ENCODE measurements at regions of chrX and their contacts with region 1.

Region 1: DNA sequence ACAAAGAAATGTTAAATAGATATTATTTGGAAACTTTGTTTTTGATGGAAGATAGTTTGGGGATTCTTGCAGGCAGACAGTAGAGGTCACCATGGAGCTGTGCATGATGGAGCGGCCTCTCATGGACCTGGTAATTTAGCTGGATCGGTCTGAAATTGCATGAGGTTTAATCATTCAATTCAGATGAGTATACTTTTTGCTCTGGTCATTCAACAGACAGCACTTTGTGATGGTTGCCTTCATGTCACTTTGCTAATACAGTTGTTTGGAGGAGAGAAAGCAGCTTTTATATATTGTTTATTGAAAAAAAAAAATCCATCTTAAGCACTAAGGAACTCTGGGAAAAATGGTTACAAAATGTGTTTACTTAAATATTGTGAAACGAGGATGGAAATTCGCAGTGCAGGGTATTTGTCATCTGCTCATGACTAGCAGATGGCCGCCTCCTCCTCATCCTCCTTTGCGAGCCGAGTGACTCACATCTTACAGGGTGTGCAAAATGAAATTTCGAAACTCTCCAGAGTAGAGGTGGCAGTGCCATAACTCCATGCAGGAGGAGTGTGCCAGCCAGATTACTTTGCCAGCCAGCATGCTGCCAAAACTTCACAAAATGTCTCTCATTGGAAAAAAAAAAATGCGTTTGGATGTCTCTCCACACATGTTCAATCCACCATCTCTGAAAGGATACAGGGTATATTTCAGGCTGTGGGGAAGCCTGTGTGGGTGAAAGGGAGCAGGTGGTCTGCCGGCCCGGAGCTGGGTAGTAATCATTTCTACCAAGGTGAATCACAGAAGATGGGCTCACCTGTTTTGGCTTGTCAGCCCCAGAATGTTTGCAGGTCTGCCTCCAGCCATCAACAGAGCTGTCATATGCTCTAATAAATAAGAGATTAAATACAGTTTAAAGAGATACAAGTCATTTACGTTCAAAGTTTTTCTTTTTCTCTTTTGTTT is 314.9 kb upstream of the DIPK2B start:
- DNase-seq: no peak
- ATAC-seq: peak; percentile 59; the same call in 1 of the 3 replicates
- H3K4me3 ChIP-seq: no peak overlapping the region
- H3K27ac ChIP-seq: no peak overlapping the region
- H3K4me1 ChIP-seq: no peaks in the 10 kb centered on the region
- H3K27me3 ChIP-seq: no peaks in the 10 kb centered on the region
- CTCF ChIP-seq: peak; percentile 42 to 59 (median 50); a peak in 5 of 6 replicates
- EP300 ChIP-seq: no peak
- POLR2A ChIP-seq: no peak
- RAD21 ChIP-seq: peak; percentile 73

Region 2: GRCh38 chrX:45537936-45538335 is 22.4 kb after region 1 on chrX:
- CTCF ChIA-PET with region 1: no interaction called
- POLR2A ChIA-PET with region 1: no interaction called
- RAD21 ChIA-PET with region 1: no interaction called
- SMC1A ChIA-PET with region 1: no interaction called
- in situ Hi-C with region 1: no loop called
- intact Hi-C with region 1: no loop called
- DNase-seq: no peak
- ATAC-seq: no peak
- H3K4me3 ChIP-seq: no peak overlapping the region
- H3K27ac ChIP-seq: no peak overlapping the region
- H3K4me1 ChIP-seq: no peaks in the 10 kb centered on the region
- H3K27me3 ChIP-seq: no peaks in the 10 kb centered on the region
- CTCF ChIP-seq: no peak
- EP300 ChIP-seq: no peak
- POLR2A ChIP-seq: no peak
- RAD21 ChIP-seq: no peak

Region 3: GRCh38 chrX:45749375-45749774 is 233.8 kb after region 1 on chrX:
- CTCF ChIA-PET with region 1: interaction called, 3 read pairs
- POLR2A ChIA-PET with region 1: no interaction called
- RAD21 ChIA-PET with region 1: no interaction called
- SMC1A ChIA-PET with region 1: no interaction called
- in situ Hi-C with region 1: no loop called
- intact Hi-C with region 1: loop called (anchors 1 kb)
- DNase-seq: no peak
- ATAC-seq: 0 out of 3 replicates have a peak, but pooled peaks have one; percentile 19
- H3K4me3 ChIP-seq: no peak overlapping the region
- H3K27ac ChIP-seq: no peak overlapping the region
- H3K4me1 ChIP-seq: no peaks in the 10 kb centered on the region
- H3K27me3 ChIP-seq: no peaks in the 10 kb centered on the region
- CTCF ChIP-seq: peak; percentile 21 to 47 (median 28); a peak in 4 of 6 replicates
- EP300 ChIP-seq: no peak
- POLR2A ChIP-seq: no peak
- RAD21 ChIP-seq: peak; percentile 36; the same call in 1 of the 2 replicates

Region 4: GRCh38 chrX:45807572-45808425 is 292.3 kb after region 1 on chrX:
- CTCF ChIA-PET with region 1: no interaction called
- POLR2A ChIA-PET with region 1: no interaction called
- RAD21 ChIA-PET with region 1: no interaction called
- SMC1A ChIA-PET with region 1: no interaction called
- in situ Hi-C with region 1: no loop called
- intact Hi-C with region 1: no loop called
- DNase-seq: no peak
- ATAC-seq: no peak
- H3K4me3 ChIP-seq: no peak overlapping the region; the same call in 1 of the 2 replicates
- H3K27ac ChIP-seq: no peak overlapping the region
- H3K4me1 ChIP-seq: peaks cover 11% of the 10 kb centered on the region
- H3K27me3 ChIP-seq: no peaks in the 10 kb centered on the region
- CTCF ChIP-seq: no peak
- EP300 ChIP-seq: no peak
- POLR2A ChIP-seq: no peak
- RAD21 ChIP-seq: no peak

Region 5: GRCh38 chrX:45843518-45843917 is 328.0 kb after region 1 on chrX:
- CTCF ChIA-PET with region 1: no interaction called
- POLR2A ChIA-PET with region 1: no interaction called
- RAD21 ChIA-PET with region 1: no interaction called
- SMC1A ChIA-PET with region 1: interaction called, 3 read pairs
- in situ Hi-C with region 1: loop called (anchors 10 kb)
- intact Hi-C with region 1: loop called (anchors 1 kb)
- DNase-seq: no peak
- ATAC-seq: peak; percentile 53; the same call in 2 of the 3 replicates
- H3K4me3 ChIP-seq: no peak overlapping the region
- H3K27ac ChIP-seq: no peak overlapping the region
- H3K4me1 ChIP-seq: no peaks in the 10 kb centered on the region
- H3K27me3 ChIP-seq: peaks cover 0 to 2% of the 10 kb centered on the region in 2 experiments; a peak in 1 of 4 replicates
- CTCF ChIP-seq: peak in 2 of 3 experiments; percentile 9 to 34; a peak in 1 of 6 replicates
- EP300 ChIP-seq: no peak
- POLR2A ChIP-seq: no peak
- RAD21 ChIP-seq: peak; percentile 55

Region 6: GRCh38 chrX:45849253-45849862 is 333.8 kb after region 1 on chrX:
- CTCF ChIA-PET with region 1: no interaction called
- POLR2A ChIA-PET with region 1: no interaction called
- RAD21 ChIA-PET with region 1: interaction called, 3 read pairs
- SMC1A ChIA-PET with region 1: interaction called, 3 read pairs
- in situ Hi-C with region 1: loop called (anchors 10 kb)
- intact Hi-C with region 1: no loop called
- DNase-seq: no peak
- ATAC-seq: peak; percentile 35; the same call in 1 of the 3 replicates
- H3K4me3 ChIP-seq: no peak overlapping the region
- H3K27ac ChIP-seq: no peak overlapping the region
- H3K4me1 ChIP-seq: no peaks in the 10 kb centered on the region
- H3K27me3 ChIP-seq: peaks cover 1 to 9% of the 10 kb centered on the region in 2 experiments; a peak in 2 of 4 replicates
- CTCF ChIP-seq: peak in 2 of 3 experiments; percentile 21; a peak in 3 of 6 replicates
- EP300 ChIP-seq: no peak
- POLR2A ChIP-seq: no peak
- RAD21 ChIP-seq: peak; percentile 42

Region 7: DNA sequence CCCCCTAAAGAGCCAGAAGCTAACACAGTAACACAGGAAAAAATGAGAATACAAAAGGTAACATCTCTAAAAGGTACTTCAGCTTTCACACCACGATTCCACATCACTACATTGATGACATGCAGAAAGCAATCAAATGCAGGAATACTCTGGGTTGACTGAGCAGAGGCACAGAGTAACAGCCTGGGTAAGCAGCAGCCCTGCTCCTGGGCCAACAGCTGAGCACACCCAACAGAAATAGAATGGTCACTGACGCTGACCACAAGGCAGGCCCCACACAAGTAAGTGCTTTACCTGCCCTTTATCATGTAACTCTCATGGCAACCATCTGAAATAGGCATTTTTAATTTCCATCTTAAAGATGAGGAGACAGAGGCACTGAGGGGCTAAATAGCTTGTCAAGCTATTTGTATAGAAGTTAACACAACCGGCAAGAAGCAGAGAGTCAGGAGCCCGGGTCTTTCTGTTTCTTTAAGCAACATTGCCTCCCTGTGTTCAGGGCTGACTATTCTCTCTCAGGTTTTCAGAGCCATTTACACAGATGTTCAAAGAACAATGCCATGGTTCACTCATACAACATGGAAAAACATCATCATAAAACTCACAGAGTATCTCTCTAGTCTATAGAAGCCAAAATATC is 860.8 kb after region 1 on chrX:
- CTCF ChIA-PET with region 1: no interaction called
- POLR2A ChIA-PET with region 1: no interaction called
- RAD21 ChIA-PET with region 1: no interaction called
- SMC1A ChIA-PET with region 1: no interaction called
- in situ Hi-C with region 1: no loop called
- intact Hi-C with region 1: loop called (anchors 10 kb)
- DNase-seq: no peak
- ATAC-seq: peak; percentile 69
- H3K4me3 ChIP-seq: no peak overlapping the region
- H3K27ac ChIP-seq: no peak overlapping the region
- H3K4me1 ChIP-seq: no peaks in the 10 kb centered on the region
- H3K27me3 ChIP-seq: no peaks in the 10 kb centered on the region
- CTCF ChIP-seq: peak in 2 of 3 experiments; percentile 13 to 45; a peak in 2 of 6 replicates
- EP300 ChIP-seq: no peak
- POLR2A ChIP-seq: no peak
- RAD21 ChIP-seq: peak; percentile 42

Region 8: GRCh38 chrX:46408553-46409407 is 893.2 kb after region 1 on chrX:
- CTCF ChIA-PET with region 1: interaction called, 7 read pairs
- POLR2A ChIA-PET with region 1: no interaction called
- RAD21 ChIA-PET with region 1: interaction called, 4 read pairs
- SMC1A ChIA-PET with region 1: no interaction called
- in situ Hi-C with region 1: no loop called
- intact Hi-C with region 1: loop called (anchors 2 kb)
- DNase-seq: peak; percentile 16
- ATAC-seq: peak; percentile 74
- H3K4me3 ChIP-seq: no peak overlapping the region
- H3K27ac ChIP-seq: no peak overlapping the region
- H3K4me1 ChIP-seq: no peaks in the 10 kb centered on the region
- H3K27me3 ChIP-seq: no peaks in the 10 kb centered on the region; a peak in 1 of 4 replicates
- CTCF ChIP-seq: peak; percentile 85 to 86 (median 85)
- EP300 ChIP-seq: no peak
- POLR2A ChIP-seq: no peak
- RAD21 ChIP-seq: peak; percentile 86